ENCODE measurements at regions of chr10 and their contacts with region 1.

Region 1: DNA sequence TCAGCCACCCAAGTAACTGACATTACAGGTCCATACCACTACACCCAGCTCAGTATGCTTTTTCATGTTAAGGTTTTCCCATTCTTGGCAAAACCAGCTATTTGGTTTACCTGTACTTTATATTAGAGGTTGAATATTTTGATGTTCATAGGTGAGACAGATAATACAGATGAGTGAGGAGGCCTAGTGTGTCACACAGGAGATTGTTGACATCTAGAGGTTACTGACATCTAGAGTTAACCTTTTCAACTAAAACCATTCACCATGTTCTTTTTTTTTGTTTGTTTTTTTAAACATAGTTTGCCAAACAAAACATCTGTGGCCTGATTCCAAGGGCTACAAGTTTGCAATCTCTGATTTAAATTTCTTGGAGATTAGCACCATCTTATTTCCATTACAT is 8.0 kb downstream of the GHITM start:
- DNase-seq: no peak
- CTCF ChIP-seq: no peak

Region 2: GRCh38 chr10:84160663-84161362 is 13.5 kb after region 1 on chr10:
- CTCF ChIA-PET with region 1: interaction called, 62 read pairs
- POLR2A ChIA-PET with region 1: no interaction called
- DNase-seq: no peak
- CTCF ChIP-seq: peak; percentile 17

Region 3: GRCh38 chr10:84166620-84167288 is 19.4 kb after region 1 on chr10:
- CTCF ChIA-PET with region 1: interaction called, 62 read pairs
- POLR2A ChIA-PET with region 1: interaction called, 8 read pairs
- DNase-seq: no peak
- CTCF ChIP-seq: no peak

Region 4: DNA sequence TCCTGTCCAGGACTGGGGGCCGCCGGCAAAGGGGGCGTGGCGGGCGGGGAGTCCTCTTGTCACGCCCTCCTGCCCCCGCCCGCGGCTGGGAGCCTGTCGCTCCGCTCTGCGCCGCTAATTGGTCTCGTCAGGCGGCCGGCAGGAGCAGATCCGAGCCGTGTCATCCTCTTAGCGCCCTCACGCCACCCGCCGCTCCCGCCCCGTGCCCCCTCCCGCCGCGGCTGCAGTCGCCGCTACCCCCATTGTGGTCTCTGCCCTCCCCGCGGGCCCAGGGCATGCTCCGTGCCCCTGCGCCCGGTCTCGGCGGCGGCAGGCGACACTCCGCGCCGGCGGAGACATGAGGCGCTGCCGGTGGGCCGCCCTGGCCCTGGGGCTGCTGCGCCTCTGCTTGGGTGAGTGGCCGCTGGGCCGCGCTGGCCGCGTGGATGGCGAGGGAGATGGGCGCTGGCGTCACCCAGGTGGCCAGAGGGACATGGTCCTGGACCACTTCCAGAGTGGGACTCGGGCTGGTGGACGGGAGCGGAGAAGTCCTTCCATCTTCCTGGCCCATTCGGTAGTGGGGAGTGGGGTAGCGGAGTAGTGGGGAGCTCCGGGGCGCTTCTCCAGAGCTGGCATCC is 47.2 kb after region 1 on chr10 and contains the start of gene CDHR1:
- CTCF ChIA-PET with region 1: interaction called, 78 read pairs
- POLR2A ChIA-PET with region 1: no interaction called
- DNase-seq: peak; percentile 65
- CTCF ChIP-seq: no peak

Region 5: DNA sequence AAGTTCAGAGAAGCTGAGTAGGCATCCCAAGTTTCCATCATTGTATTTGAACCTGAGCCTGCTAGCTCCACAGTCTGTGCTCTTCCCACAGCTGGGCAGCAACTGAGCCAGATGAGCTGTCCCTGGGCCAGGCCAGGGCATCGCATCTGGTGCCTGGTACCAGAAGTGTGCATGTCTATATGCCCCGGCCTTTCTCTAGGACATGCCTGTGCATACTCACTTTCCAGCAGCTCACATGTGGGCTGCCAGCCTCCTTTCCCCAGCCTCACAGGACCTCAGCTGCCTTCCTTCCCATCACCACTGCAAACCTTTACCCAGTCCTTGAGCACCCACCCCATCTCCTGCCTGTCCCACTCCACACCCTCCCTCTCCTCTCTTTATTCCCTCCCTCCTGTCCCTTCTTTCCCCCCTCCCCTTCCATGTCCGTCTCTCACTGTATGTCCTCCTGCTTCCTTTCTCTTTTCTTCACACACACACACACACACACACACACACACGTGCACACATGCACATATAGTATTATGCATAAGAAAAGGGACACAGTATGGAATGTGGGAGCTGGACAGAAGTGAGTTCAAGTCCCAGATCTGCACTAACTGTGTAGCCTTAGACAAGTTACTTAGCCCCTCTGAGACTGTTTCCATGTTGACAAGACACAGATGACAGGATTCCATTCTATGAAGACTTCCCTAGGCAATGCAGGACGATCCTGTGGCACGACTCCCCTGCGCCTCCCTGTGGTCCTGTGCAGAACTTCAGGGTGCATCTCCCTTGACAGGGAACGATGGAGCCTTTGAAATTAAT is 57.9 kb after region 1 on chr10:
- CTCF ChIA-PET with region 1: interaction called, 115 read pairs
- POLR2A ChIA-PET with region 1: interaction called, 3 read pairs
- DNase-seq: peak; percentile 77
- CTCF ChIP-seq: peak; percentile 93

Region 6: DNA sequence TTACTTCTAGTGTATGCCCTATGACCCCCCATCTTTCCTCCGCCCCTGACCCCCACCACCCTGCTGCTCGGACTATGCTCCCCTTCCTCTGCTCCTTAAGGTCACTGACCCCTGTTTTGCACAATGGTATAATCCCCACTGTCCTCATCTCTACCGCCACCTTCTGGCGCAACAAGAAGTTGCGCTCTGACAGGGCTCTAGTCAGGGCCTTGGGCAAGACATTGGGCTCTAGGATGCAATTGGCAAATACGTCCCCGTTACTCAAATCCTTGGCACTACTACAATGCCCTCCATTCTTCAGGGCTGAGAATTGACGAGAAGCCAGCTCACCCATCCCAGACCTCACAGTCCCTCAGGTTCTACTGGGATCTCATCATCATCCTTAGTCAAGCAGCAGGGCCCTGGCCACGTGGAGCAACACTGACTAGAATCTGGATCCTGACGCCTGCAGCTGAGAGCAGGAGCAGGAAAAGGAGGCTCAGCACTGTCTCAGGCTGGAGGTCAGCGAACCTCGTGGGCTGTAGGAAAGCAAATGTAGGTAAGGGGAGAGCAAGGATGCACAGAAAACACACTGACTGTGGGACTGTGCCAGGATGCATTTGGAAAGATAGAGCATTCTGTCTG is 67.4 kb after region 1 on chr10:
- CTCF ChIA-PET with region 1: interaction called, 18 read pairs
- POLR2A ChIA-PET with region 1: no interaction called
- DNase-seq: peak; percentile 68
- CTCF ChIP-seq: peak; percentile 62